ENCODE measurements at regions of chr5 and their contacts with region 1.

Region 1: DNA sequence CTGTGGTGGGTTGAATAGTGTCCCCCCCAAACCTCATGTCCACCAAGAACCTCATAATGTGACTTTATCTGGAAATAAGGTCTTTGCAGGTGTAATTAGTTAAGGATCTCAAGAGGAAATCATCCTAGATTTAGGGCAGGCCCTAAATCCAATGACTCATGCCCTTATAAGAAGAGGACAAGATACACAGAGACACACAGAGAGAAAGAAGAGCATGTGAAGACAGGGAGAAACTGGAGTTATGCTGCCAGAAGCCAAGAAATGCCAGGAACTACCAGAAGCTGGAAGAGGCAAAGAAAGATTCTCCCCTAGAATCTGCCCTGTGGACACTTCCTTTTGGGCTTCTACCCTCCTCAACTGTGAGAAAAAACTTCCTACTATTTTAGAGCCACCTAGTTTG is 8.8 kb downstream of the FAM13B start:
- DNase-seq: no peak
- H3K27ac ChIP-seq: no peak overlapping the region
- CTCF ChIP-seq: no peak

Region 2: DNA sequence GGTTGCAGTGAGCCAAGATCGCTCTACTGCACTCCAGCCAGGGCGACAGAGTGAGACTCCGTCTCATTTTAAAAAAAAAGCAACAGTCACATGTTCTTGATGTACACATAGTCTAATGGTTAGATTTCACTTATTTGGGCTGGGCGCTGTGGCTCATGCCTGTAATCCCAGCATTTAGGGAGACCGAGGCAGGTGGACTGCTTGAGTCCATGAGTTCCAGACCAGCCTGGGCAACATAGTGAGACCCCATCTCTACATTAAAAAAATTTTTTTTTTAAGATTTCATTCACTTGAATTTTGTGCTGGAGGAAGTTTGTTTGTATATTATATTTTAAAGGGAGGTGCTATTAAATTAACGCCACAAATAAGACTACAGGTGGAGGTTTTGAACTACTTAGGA is 81.6 kb after region 1 on chr5:
- CTCF ChIA-PET with region 1: no interaction called
- POLR2A ChIA-PET with region 1: interaction called, 11 read pairs
- DNase-seq: no peak
- H3K27ac ChIP-seq: no peak overlapping the region
- CTCF ChIP-seq: no peak